CD4-positive, alpha-beta T cell (primary cell): ENCODE measurements at regions of chr11 and their contacts with region 1.

Region 1: DNA sequence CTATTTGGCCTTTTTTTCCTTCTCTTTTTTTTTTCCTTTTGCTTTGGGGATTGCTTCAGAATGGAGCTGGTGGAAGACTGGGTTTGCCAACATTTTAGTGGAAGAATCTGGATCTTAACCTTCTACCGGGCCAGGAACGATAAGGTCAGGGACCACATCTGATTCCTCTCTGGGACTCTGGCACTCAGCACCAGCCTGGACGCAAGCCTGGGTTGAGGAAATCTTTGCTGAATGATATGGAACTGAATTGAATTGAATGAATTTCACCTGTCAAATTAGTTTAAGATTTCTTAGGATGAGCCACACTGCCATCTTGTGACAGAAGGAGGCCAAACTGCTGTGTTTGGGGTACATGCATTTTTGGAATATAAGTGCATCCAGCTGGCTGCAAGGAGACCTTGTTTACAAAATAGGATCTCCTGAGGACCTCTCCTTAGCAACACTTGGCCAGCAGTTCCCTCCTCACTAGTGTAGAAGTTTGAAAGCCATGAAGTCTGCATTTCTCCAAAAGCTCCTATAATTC is 30.4 kb downstream of the TPBGL start:
- DNase-seq: peak in 11 of 14 experiments; percentile 15 to 60 (median 31)
- ATAC-seq: no peak
- H3K4me3 ChIP-seq: no peak overlapping the region
- H3K4me3 Mint-ChIP-seq: no peak overlapping the region
- H3K27ac ChIP-seq: no peak overlapping the region
- H3K27ac Mint-ChIP-seq: peak overlapping the region; percentile 86
- H3K4me1 ChIP-seq: peaks cover 54% of the 10 kb centered on the region
- H3K4me1 Mint-ChIP-seq: peaks cover 43% of the 10 kb centered on the region
- H3K27me3 ChIP-seq: no peaks in the 10 kb centered on the region
- H3K27me3 Mint-ChIP-seq: no peaks in the 10 kb centered on the region
- CTCF ChIP-seq: peak; percentile 63

Region 2: DNA sequence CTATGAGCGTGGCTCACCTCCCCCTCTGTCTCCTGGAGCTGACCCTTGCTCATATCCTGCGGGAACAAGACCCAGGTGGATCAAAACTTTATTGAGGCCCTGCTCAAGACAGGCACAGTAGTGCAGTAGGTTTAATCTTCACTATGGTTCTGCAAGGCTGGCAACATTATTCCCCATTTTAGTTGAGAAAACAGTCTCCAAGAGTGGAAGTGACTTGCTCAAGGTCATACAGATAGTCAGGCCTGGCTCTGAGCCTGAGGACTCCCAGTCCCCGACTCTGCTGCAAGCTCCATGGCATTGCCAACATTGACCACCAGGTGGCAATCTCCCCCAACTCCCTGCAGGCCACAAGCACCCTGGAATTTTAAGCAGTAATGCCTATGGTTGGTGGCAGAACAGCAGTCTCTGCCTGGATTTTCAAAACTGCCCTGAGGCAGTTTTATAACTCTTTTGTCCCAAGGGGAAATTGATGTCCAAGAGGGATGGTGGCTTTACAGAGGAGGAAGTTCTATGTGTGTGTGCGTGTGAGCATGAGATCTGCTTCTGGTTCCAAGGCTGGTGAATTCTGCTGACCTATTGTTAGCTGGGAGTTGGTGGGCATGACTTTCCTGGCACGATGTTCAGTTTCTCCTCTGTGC is 248.1 kb before region 1 on chr11:
- CTCF ChIA-PET with region 1: interaction called, 7 read pairs
- POLR2A ChIA-PET with region 1: no interaction called
- intact Hi-C with region 1: loop called (anchors 5 to 10 kb)
- DNase-seq: peak; percentile 59 to 84 (median 70)
- ATAC-seq: peak; percentile 86
- H3K4me3 ChIP-seq: no peak overlapping the region
- H3K4me3 Mint-ChIP-seq: no peak overlapping the region
- H3K27ac ChIP-seq: no peak overlapping the region
- H3K27ac Mint-ChIP-seq: no peak overlapping the region
- H3K4me1 ChIP-seq: no peaks in the 10 kb centered on the region
- H3K4me1 Mint-ChIP-seq: no peaks in the 10 kb centered on the region
- H3K27me3 ChIP-seq: no peaks in the 10 kb centered on the region
- H3K27me3 Mint-ChIP-seq: no peaks in the 10 kb centered on the region
- CTCF ChIP-seq: peak; percentile 96

Region 3: DNA sequence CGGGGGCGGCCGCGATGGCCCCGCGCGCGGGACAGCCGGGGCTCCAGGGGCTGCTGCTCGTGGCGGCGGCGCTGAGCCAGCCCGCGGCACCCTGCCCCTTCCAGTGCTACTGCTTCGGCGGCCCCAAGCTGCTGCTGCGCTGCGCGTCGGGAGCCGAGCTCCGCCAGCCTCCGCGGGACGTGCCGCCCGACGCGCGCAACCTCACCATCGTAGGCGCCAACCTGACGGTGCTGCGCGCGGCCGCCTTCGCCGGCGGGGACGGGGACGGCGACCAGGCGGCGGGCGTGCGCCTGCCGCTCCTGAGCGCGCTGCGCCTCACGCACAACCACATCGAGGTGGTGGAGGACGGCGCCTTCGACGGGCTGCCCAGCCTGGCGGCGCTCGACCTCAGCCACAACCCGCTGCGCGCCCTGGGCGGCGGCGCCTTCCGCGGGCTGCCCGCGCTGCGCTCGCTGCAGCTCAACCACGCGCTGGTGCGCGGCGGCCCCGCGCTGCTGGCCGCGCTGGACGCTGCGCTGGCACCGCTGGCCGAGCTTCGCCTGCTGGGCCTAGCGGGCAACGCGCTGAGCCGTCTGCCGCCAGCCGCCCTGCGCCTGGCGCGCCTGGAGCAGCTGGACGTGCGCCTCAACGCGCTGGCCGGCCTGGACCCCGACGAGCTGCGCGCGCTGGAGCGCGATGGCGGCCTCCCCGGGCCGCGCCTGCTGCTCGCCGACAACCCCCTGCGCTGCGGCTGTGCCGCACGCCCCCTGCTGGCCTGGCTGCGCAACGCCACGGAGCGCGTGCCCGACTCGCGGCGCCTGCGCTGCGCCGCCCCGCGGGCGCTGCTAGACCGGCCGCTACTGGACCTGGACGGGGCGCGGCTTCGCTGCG is 29.7 kb before region 1 on chr11:
- CTCF ChIA-PET with region 1: interaction called, 10 read pairs
- POLR2A ChIA-PET with region 1: interaction called, 12 read pairs
- intact Hi-C with region 1: no loop called
- DNase-seq: peak; percentile 64 to 93 (median 85)
- ATAC-seq: peak; percentile 88
- H3K4me3 ChIP-seq: peak overlapping the region; percentile 30
- H3K4me3 Mint-ChIP-seq: peak overlapping the region; percentile 82
- H3K27ac ChIP-seq: no peak overlapping the region
- H3K27ac Mint-ChIP-seq: no peak overlapping the region
- H3K4me1 ChIP-seq: peaks cover 15% of the 10 kb centered on the region
- H3K4me1 Mint-ChIP-seq: peaks cover 5% of the 10 kb centered on the region
- H3K27me3 ChIP-seq: peaks cover 33% of the 10 kb centered on the region in 2 experiments
- H3K27me3 Mint-ChIP-seq: peaks cover 63% of the 10 kb centered on the region
- CTCF ChIP-seq: peak; percentile 40

Region 4: GRCh38 chr11:75328426-75329277 is 57.7 kb after region 1 on chr11:
- CTCF ChIA-PET with region 1: no interaction called
- POLR2A ChIA-PET with region 1: interaction called, 19 read pairs
- intact Hi-C with region 1: no loop called
- DNase-seq: peak; percentile 20 to 80 (median 58)
- ATAC-seq: peak; percentile 96
- H3K4me3 ChIP-seq: no peak overlapping the region
- H3K4me3 Mint-ChIP-seq: peak overlapping the region; percentile 80
- H3K27ac ChIP-seq: peak overlapping the region; percentile 44 to 64
- H3K27ac Mint-ChIP-seq: peak overlapping the region; percentile 96
- H3K4me1 ChIP-seq: peaks cover 62% of the 10 kb centered on the region
- H3K4me1 Mint-ChIP-seq: peaks cover 80% of the 10 kb centered on the region
- H3K27me3 ChIP-seq: no peaks in the 10 kb centered on the region
- H3K27me3 Mint-ChIP-seq: no peaks in the 10 kb centered on the region
- CTCF ChIP-seq: peak; percentile 57

Region 5: DNA sequence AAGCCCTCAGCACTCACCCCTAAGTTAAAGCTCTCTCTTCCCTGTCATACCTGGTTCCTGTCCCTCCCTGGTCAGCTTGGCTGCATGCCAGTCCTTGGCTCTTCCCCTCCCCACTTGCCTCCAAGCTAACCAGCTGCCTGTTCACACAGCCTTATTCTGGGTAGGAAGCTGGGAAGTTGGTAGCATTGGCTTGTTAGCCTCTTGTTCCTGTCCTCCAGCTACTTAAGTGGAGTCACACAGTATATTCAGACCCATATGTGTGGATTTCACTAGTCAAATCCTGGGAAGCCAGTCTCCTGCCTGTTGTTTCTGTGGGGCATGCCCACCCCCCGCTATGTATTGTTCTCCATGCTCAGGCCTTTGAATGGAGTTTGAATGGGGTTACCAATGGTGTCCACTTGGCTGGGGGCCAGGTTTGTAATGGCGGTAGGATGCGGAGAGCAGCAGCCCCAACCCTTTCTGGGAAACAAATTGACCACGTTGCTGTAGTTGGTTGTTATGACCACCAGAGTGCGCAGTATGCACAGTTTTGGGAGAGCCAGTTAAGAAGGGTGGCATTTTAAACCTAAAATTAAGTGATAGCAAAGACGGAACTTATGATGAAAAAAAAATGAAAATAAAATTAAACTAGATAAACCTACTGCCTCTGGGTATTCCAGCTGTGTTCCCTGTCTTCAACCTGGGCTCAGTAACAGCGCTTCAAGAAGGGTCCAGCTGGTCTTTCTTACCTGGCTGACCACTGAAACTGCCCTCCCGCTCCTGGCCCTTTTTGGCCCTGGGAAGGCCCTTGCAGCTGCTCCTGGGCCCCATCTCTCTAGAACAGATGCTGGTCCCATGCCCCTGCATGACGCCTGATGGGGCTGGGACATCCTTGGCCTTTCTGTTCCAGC is 117.7 kb after region 1 on chr11:
- CTCF ChIA-PET with region 1: interaction called, 22 read pairs
- POLR2A ChIA-PET with region 1: interaction called, 33 read pairs
- intact Hi-C with region 1: loop called in 1 of 2 experiments (anchors 1 kb)
- DNase-seq: peak; percentile 50 to 88 (median 58)
- ATAC-seq: peak; percentile 90
- H3K4me3 ChIP-seq: no peak overlapping the region
- H3K4me3 Mint-ChIP-seq: no peak overlapping the region
- H3K27ac ChIP-seq: no peak overlapping the region
- H3K27ac Mint-ChIP-seq: no peak overlapping the region
- H3K4me1 ChIP-seq: peaks cover 19% of the 10 kb centered on the region
- H3K4me1 Mint-ChIP-seq: peaks cover 12% of the 10 kb centered on the region
- H3K27me3 ChIP-seq: no peaks in the 10 kb centered on the region
- H3K27me3 Mint-ChIP-seq: no peaks in the 10 kb centered on the region
- CTCF ChIP-seq: peak; percentile 90

Region 6: DNA sequence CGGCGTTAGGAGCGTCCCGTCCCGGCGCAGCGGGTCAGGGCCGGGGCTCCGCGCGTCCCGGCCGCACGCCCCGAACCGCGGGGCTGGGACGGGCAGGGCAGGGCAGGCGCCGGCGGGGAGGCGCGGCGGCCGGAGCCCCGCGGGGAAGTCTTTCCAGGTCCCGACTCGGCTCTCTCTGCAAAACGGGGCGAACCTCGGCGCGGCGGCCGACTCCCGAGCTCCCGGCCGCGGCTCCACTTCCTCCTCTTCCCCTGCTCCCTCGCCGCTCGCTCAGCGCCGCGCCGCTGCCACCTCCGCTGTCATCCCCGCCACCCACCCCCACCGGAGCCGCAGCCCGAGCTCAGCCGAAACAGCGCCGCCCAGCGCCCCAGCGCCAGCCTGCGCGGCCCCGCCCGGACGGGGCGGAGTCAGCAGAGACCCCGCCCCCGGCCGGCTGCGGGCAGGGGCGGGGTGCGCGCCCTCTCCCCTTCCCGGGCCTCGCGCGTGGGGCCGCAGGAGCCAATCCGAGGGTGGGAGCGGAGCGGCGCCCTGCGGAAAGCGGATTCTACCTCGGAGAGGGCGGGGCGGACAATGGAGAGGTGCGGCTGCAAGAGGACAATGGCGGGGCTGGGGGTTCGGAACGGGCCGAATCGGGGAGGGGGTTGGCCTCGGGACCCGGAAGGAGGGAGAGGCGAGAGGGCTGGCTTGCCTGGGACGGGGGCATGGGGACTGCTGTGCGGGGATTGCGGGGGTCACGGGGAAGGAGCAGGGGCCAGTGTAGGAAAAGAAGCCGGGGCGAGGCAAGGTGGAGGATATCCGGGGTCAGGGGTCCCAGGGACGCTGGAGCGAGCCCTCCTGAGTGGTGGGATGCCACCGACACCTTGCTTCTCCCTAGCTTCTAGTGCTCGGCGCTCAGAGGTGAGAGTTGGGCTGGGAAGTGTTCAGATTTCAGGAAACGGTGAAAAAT is 254.9 kb after region 1 on chr11 and contains the start of gene GDPD5:
- CTCF ChIA-PET with region 1: no interaction called
- POLR2A ChIA-PET with region 1: interaction called, 5 read pairs
- intact Hi-C with region 1: loop called (anchors 5 to 10 kb)
- DNase-seq: peak; percentile 73 to 95 (median 84)
- ATAC-seq: peak; percentile 92
- H3K4me3 ChIP-seq: peak within 1 kb of the TSS; percentile 78
- H3K4me3 Mint-ChIP-seq: peak within 1 kb of the TSS; percentile 94
- H3K27ac ChIP-seq: no peak within 1 kb of the TSS
- H3K27ac Mint-ChIP-seq: peak within 1 kb of the TSS; percentile 80
- H3K4me1 ChIP-seq: peaks cover 45% of the 10 kb centered on the region
- H3K4me1 Mint-ChIP-seq: peaks cover 57% of the 10 kb centered on the region
- H3K27me3 ChIP-seq: no peaks in the 10 kb centered on the region
- H3K27me3 Mint-ChIP-seq: no peaks in the 10 kb centered on the region
- CTCF ChIP-seq: no peak
- total RNA-seq, gene GDPD5: 91.6 to 101 TPM